Transverse colon (tissue), 4 donors: ENCODE measurements at regions of chr6 and their contacts with region 1.

Region 1: DNA sequence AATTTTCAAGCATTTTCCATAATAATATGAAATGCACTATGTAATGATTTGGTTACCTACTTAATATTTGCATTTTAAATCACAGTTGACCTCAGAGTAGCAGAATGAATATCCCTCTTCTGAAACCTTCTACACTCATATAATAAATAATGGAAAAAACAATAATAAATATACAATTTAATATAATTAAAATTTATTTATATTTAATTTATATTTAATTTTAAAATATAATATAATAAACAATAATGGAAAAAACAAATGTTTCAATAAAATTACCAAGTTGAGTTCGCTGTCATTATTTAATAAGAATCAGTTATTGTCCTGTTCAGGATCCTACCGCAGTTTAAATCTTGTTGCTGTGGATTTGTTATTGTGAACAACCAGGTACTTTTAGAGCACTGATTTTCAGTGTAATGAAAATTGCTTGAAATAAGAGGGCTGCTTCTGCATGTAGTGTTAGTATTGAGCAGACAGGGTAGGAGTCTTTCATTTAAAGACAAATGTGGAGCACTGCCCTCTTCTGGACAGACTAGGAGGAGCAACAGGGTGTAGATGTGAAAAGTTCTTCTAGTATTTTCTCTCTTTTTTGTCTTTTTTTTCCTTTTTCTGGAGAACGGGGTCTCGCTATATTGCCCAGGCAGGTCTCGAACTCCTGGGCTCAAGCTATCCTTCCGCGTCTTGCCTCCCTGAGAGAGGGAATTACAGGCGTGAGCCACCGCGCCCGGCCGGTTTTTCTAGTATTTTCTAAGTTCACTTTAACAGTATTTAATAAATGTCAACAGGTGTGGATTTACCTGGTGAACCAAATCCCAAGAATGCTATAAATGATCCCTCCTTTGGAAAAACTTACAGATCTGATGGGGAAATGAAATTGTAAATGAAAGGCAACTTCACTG is 13.6 kb downstream of the TRAPPC3L start:
- DNase-seq: peak; percentile 54
- H3K4me3 ChIP-seq: no peak overlapping the region
- H3K27ac ChIP-seq: no peak overlapping the region
- H3K4me1 ChIP-seq: no peaks in the 10 kb centered on the region
- H3K27me3 ChIP-seq: peaks cover 6% of the 10 kb centered on the region
- CTCF ChIP-seq: peak; percentile 73 to 80 (median 73)
- EP300 ChIP-seq: no peak
- POLR2A ChIP-seq: no peak

Region 2: GRCh38 chr6:116268589-116269293 is 263.2 kb before region 1 on chr6:
- in situ Hi-C with region 1: loop called in 2 of 4 experiments (anchors 10 kb)
- intact Hi-C with region 1: no loop called
- DNase-seq: no peak
- H3K4me3 ChIP-seq: no peak overlapping the region
- H3K27ac ChIP-seq: no peak overlapping the region
- H3K4me1 ChIP-seq: no peaks in the 10 kb centered on the region
- H3K27me3 ChIP-seq: no peaks in the 10 kb centered on the region
- CTCF ChIP-seq: peak; percentile 67 to 81 (median 70)
- EP300 ChIP-seq: no peak
- POLR2A ChIP-seq: no peak

Region 3: GRCh38 chr6:116298973-116299372 is 232.9 kb before region 1 on chr6:
- in situ Hi-C with region 1: loop called in 1 of 4 experiments (anchors 10 kb)
- intact Hi-C with region 1: no loop called
- DNase-seq: no peak
- H3K4me3 ChIP-seq: no peak overlapping the region
- H3K27ac ChIP-seq: no peak overlapping the region
- H3K4me1 ChIP-seq: no peaks in the 10 kb centered on the region
- H3K27me3 ChIP-seq: no peaks in the 10 kb centered on the region
- CTCF ChIP-seq: no peak
- EP300 ChIP-seq: no peak
- POLR2A ChIP-seq: no peak

Region 4: DNA sequence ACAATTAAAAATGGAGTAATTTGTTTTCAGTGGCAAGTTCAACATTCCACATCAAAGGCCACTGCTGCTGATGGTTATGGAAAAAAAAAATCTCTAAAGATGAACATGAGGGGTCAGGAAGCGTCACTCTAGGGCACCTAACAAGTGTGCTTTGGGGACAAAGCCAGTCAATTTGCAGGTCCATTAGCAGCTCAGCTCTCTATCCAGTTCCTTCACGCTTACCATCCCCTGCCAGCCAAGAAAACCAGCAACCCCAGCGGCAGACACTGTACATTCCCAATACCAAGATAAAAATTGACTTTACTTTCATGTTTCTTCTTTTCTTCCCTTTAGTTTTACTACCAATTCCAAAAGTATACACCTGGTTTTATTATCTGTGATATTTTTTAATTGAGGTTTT is 355.2 kb after region 1 on chr6:
- in situ Hi-C with region 1: no loop called
- intact Hi-C with region 1: no loop called
- DNase-seq: no peak
- H3K4me3 ChIP-seq: no peak overlapping the region
- H3K27ac ChIP-seq: no peak overlapping the region
- H3K4me1 ChIP-seq: no peaks in the 10 kb centered on the region
- H3K27me3 ChIP-seq: no peaks in the 10 kb centered on the region
- CTCF ChIP-seq: no peak
- EP300 ChIP-seq: no peak
- POLR2A ChIP-seq: no peak